ENCODE measurements at regions of chr11 and their contacts with region 1.

Region 1: DNA sequence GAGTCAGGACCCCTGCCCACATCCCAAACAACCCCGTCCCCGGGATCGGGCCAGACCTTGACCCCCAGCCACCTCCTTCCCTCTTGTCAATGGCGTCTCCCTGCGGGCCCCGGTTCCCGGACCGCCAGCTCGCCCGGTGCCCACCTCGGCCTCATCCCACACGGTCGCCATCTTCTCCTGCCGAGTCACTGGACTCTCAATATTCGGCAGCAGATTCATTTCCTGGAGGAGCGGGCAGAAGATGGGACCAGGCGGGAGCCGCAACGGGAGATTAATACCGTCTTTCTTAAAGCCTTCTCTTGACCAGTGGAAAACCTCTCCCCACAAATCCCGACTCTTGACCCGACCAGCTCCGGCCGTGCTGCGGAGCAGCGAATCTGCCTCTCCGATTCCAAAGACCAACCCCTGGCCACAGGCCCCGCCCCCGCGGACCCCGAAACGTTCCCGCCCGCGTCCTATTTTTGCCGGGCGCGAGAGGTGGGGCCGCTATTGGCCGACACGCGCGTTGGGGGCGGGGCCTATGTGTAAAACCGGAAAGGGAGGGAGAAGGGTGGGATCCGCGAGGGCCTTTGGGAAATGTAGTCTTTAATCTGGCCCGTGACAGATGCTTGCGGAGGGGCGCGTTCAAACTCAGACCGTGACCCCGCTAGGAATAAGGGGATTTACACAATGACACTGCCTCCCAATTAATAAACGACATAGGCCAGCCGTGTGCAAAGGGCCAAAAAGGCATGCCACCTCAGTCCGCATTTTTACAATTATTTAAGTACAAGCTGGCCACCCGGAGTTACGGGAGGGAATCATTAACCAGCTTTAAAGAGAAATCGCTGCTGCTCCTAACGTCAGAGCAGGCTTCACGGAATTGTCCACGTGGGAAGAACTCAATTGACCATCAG is at the start of gene PSMC3:
- DNase-seq: peak; percentile 99
- ATAC-seq: peak; percentile 97
- H3K4me3 Mint-ChIP-seq: peak within 1 kb of the TSS; percentile 100
- H3K27ac Mint-ChIP-seq: peak within 1 kb of the TSS; percentile 100
- H3K4me1 Mint-ChIP-seq: peaks cover 31% of the 10 kb centered on the region
- H3K27me3 Mint-ChIP-seq: no peaks in the 10 kb centered on the region
- total RNA-seq, gene PSMC3: 150 to 164 TPM

Region 2: DNA sequence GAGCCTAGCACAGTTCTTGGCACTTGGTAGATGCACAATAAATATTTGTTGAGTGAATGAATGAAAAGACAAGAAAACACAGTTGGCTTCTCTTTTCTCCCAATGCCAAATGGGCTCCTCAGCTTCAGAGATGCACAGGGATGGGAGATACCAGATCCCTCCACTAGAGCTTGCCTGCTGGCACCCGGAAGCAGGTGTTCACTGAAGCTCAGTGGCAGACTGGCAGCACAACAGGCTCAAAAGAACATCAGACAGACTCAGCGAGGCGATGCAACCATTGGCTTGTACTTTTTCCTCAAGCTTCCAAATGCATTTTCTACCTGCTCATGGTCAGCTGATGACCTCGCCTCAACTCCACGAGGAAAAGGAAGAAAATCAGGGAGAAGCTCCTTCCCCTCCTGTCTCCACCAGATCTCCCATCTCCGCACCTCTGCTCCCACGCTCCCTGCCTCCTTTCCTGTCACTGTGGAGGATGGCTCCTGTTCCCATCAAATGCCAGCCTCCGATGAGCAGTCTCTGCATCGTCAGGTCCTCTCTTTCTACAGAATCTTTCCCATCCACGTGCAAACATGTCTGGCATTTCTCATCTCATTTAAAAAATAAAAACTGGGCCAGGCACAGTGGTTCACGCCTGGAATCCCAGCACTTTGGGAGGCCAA is 16.9 kb after region 1 on chr11:
- CTCF ChIA-PET with region 1: no interaction called
- DNase-seq: no peak
- ATAC-seq: no peak
- H3K4me3 Mint-ChIP-seq: no peak overlapping the region
- H3K27ac Mint-ChIP-seq: no peak overlapping the region
- H3K4me1 Mint-ChIP-seq: no peaks in the 10 kb centered on the region
- H3K27me3 Mint-ChIP-seq: no peaks in the 10 kb centered on the region

Region 3: DNA sequence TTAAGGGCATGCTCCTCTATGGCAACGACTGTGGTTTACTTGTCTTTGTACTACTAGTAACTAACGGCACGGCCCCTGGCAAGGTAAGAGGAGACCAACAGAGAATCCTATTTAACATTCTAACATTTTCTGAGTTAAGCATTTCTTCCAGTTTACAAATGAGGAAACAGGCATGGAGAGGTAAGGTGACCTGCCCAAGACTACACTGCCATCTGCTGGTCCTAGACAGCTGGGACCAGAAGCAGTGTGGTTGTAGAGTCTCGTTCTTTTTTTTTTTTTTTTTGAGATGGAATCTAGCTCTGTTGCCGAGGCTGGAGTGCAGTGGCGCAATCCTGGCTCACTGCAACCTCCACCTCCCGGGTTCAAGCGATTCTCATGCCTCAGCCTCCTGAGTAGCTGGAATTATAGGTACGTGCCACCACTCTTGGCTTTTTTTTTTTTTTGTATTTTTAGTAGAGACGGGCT is 27.9 kb after region 1 on chr11:
- CTCF ChIA-PET with region 1: interaction called, 14 read pairs
- DNase-seq: peak; percentile 85
- ATAC-seq: peak; percentile 88
- H3K4me3 Mint-ChIP-seq: no peak overlapping the region
- H3K27ac Mint-ChIP-seq: no peak overlapping the region
- H3K4me1 Mint-ChIP-seq: peaks cover 4% of the 10 kb centered on the region
- H3K27me3 Mint-ChIP-seq: no peaks in the 10 kb centered on the region

Region 4: GRCh38 chr11:47667135-47667534 is 240.8 kb after region 1 on chr11:
- CTCF ChIA-PET with region 1: no interaction called
- DNase-seq: no peak
- ATAC-seq: no peak
- H3K4me3 Mint-ChIP-seq: no peak overlapping the region
- H3K27ac Mint-ChIP-seq: no peak overlapping the region
- H3K4me1 Mint-ChIP-seq: peaks cover 3% of the 10 kb centered on the region
- H3K27me3 Mint-ChIP-seq: no peaks in the 10 kb centered on the region